ENCODE measurements at regions of chr7 and their contacts with region 1.

Region 1: GRCh38 chr7:140479062-140479738 is at the start of gene MKRN1:
- DNase-seq: peak; percentile 94 to 97
- H3K4me3 ChIP-seq: peak within 1 kb of the TSS; percentile 84 to 96 (median 88)
- H3K27ac ChIP-seq: peak within 1 kb of the TSS; percentile 85
- H3K4me1 ChIP-seq: peaks cover 0 to 12% (median 5%) of the 10 kb centered on the region in 4 experiments; a peak in 3 of 7 replicates
- H3K27me3 ChIP-seq: no peaks in the 10 kb centered on the region
- CTCF ChIP-seq: no peak
- EP300 ChIP-seq: no peak
- POLR2A ChIP-seq: peak; percentile 21 to 69
- RAD21 ChIP-seq: no peak
- total RNA-seq, gene MKRN1: 94.6 and 99.6 TPM in 2 replicates

Region 2: GRCh38 chr7:140512317-140513000 is 33.3 kb after region 1 on chr7:
- CTCF ChIA-PET with region 1: interaction called, 24 read pairs
- POLR2A ChIA-PET with region 1: interaction called, 3 read pairs
- DNase-seq: no peak
- H3K4me3 ChIP-seq: no peak overlapping the region
- H3K27ac ChIP-seq: no peak overlapping the region
- H3K4me1 ChIP-seq: no peaks in the 10 kb centered on the region
- H3K27me3 ChIP-seq: no peaks in the 10 kb centered on the region
- CTCF ChIP-seq: no peak
- EP300 ChIP-seq: no peak
- POLR2A ChIP-seq: no peak
- RAD21 ChIP-seq: no peak

Region 3: DNA sequence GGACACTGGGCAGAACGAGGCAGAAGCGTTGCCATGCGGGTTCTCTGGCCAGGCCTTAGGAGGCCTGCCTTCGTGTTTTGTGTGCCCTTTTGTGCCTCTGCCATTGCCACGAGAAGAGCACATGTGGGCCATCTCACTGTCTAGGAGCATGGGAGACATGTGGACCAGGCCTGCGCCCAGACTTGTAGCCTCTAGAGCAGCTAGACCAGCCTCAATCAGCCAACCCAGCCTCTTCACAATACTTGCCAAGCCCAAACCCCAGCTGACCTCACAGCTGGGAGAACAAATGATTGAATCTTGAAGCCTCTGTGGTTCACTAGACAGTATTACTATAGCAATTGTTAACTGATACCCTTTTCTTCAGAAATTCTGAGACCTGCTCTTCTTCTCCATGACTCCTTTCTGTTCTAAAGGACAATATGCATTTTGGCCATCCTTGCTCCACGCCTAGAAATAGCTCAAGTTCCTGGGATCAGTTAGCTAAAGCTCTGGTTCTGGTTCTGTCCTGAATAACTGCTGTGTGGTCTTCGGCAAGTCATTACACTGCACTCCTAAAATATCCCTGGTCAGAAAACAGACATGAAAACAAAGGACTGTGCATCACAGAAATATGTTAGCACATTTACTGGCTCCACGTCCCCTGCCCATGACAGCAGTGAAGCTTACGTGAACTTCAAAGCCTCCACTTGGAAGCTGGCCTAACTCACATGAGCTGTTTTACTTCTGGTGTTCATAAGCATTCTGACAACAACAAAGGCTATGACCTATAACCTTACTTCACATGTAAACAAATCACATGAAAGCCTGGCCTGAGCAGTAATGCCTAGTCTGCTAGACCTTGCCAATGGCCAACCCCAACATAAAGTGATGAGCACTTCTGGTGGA is 72.4 kb after region 1 on chr7:
- CTCF ChIA-PET with region 1: no interaction called
- POLR2A ChIA-PET with region 1: no interaction called
- DNase-seq: no peak
- H3K4me3 ChIP-seq: no peak overlapping the region
- H3K27ac ChIP-seq: no peak overlapping the region
- H3K4me1 ChIP-seq: peaks cover 0 to 2% (median 0%) of the 10 kb centered on the region in 4 experiments; a peak in 1 of 7 replicates
- H3K27me3 ChIP-seq: no peaks in the 10 kb centered on the region
- CTCF ChIP-seq: no peak
- EP300 ChIP-seq: no peak
- POLR2A ChIP-seq: no peak
- RAD21 ChIP-seq: no peak

Measured in H1 (cell line).